Activated CD8-positive, alpha-beta memory T cell treated with anti-CD3 and anti-CD28 coated beads, Interleukin-2, amount 10 ng/mL, durations not matched to agents 7 days and 5 days (primary cell): ENCODE measurements at regions of chr6 and their contacts with region 1.

Region 1: GRCh38 chr6:41920921-41921711 is at the starts of genes BYSL and MED20:
- DNase-seq: peak; percentile 96
- ATAC-seq: peak; percentile 91
- H3K4me3 Mint-ChIP-seq: peak within 1 kb of the TSS; percentile 88
- H3K27ac Mint-ChIP-seq: peak within 1 kb of the TSS; percentile 98
- H3K4me1 Mint-ChIP-seq: peaks cover 57% of the 10 kb centered on the region
- H3K27me3 Mint-ChIP-seq: no peaks in the 10 kb centered on the region
- total RNA-seq, gene BYSL: 33.1 to 48.5 TPM
- total RNA-seq, gene MED20: 21.9 to 25.6 TPM

Region 2: DNA sequence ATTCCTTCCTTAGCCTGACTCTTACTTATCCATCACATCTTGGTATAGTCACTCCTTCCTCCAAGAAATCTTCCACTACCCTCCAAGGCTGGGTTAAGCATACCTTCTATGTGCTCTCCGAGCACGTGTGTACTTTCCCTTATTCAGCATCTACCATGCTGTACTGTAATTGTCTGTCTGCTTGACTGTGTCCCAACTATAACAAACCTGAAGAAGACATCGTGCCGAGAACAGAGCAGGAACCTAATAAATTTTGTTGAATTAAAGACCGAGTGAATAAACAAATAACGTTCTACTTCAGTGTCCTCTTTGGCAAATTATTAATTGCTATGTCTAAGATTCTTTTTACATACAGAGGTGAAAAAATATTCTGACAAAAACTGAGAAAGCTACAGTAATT is 61.8 kb before region 1 on chr6:
- CTCF ChIA-PET with region 1: no interaction called
- DNase-seq: no peak
- ATAC-seq: no peak
- H3K4me3 Mint-ChIP-seq: no peak overlapping the region
- H3K27ac Mint-ChIP-seq: no peak overlapping the region
- H3K4me1 Mint-ChIP-seq: no peaks in the 10 kb centered on the region
- H3K27me3 Mint-ChIP-seq: no peaks in the 10 kb centered on the region

Region 3: GRCh38 chr6:41895300-41896233 is 25.5 kb before region 1 on chr6 and contains the start of gene USP49:
- CTCF ChIA-PET with region 1: interaction called, 31 read pairs
- DNase-seq: peak; percentile 94
- ATAC-seq: peak; percentile 98
- H3K4me3 Mint-ChIP-seq: no peak within 1 kb of the TSS
- H3K27ac Mint-ChIP-seq: peak within 1 kb of the TSS; percentile 75
- H3K4me1 Mint-ChIP-seq: peaks cover 9% of the 10 kb centered on the region
- H3K27me3 Mint-ChIP-seq: peaks cover 4% of the 10 kb centered on the region
- total RNA-seq, gene USP49: 7.7 to 9.1 TPM

Region 4: DNA sequence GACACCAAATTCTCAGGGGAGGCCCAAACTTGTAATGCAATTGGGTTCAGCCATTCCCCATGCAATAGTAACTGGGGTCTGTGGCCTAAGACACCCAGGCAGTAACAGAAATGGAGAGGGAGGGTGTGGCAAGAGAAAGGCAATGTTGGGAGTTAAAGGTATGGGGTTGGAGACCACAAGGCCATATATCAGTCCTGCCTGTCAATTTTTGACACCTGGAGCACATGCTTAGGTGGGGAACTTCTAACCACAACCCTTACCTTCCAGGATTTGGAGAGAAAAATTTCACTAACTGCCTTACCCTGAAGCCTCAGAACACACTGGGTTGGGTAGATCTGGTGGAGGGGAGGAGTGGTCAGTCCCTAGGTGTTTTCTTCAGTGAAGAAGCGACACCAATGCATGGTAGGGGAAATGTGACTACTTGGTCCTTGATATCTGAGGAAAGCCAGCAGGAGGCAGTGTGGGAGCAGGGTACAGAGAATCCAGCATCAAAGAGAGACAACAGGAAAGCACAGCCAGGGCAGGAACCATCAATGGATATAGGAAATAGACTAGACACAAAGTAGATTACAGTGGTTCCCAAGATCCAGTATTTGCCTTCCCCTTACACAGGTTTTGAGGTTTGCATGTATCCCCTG is 19.1 kb before region 1 on chr6:
- CTCF ChIA-PET with region 1: interaction called, 31 read pairs
- DNase-seq: peak; percentile 67
- ATAC-seq: peak; percentile 57
- H3K4me3 Mint-ChIP-seq: no peak overlapping the region
- H3K27ac Mint-ChIP-seq: peak overlapping the region; percentile 41
- H3K4me1 Mint-ChIP-seq: peaks cover 15% of the 10 kb centered on the region
- H3K27me3 Mint-ChIP-seq: no peaks in the 10 kb centered on the region

Region 5: DNA sequence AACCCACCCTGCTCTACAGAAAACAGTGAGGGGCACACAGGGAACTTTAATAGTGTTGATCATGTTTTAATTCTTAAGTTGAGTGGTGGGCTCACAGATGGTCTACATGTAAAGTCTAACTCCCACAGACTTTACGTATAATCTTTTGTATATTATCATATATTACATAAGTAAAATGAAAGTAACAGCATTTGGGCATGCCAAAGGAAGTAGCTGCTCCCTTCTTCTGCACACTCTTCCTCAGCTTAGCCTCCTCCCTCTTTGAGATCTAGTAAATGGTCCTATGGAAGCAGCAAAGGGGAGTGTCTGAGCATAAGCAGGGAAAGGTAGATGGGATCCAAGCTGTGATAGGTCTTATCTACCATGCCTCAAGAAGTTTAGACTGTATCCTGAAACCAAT is 11.4 kb before region 1 on chr6:
- CTCF ChIA-PET with region 1: interaction called, 12 read pairs
- DNase-seq: no peak
- ATAC-seq: no peak
- H3K4me3 Mint-ChIP-seq: no peak overlapping the region
- H3K27ac Mint-ChIP-seq: peak overlapping the region; percentile 18
- H3K4me1 Mint-ChIP-seq: peaks cover 23% of the 10 kb centered on the region
- H3K27me3 Mint-ChIP-seq: no peaks in the 10 kb centered on the region

Region 6: DNA sequence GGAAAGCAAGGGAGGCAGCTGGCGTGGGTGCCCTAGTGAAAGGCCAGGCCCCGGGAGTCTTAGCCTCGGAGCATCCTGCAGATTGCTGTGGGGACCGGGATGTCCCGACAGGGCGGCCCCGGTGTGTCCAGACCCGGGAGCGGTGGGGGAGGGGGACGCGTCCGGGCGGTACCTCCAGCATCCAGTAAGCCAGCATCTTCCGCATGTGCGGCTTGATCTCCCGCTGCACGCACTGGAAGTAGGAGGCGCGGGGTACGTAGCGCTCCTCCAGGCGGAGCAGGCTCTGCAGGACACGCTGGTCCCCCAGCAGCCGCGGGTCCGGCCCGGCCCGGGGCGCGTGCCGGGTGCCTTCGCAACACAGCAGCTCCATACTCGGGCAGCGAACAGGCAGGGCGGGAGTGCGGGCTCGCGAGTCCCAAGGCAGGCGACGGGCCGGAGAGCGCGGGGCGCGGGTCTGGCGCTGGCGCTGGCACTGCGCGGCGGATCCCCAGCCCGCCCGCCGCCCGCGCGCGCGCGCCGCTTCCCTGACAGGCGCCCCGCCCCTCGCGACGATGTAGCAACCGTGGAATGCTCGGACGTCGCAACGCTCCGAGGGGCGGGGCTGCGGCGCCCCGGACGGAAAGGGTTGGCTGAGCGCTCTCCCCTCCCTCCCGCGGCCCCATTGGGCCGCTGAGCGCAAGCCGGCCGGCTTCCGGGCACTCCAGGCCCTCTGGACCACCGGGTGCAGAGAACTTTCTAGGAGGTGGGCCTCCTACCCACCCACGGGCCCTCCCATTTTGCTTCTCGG is 20.4 kb after region 1 on chr6 and contains the start of gene CCND3:
- CTCF ChIA-PET with region 1: interaction called, 177 read pairs
- DNase-seq: peak; percentile 95
- ATAC-seq: peak; percentile 84
- H3K4me3 Mint-ChIP-seq: peak within 1 kb of the TSS; percentile 99
- H3K27ac Mint-ChIP-seq: peak within 1 kb of the TSS; percentile 89
- H3K4me1 Mint-ChIP-seq: peaks cover 55% of the 10 kb centered on the region
- H3K27me3 Mint-ChIP-seq: no peaks in the 10 kb centered on the region
- total RNA-seq, gene CCND3: 333 to 502 TPM

Region 7: GRCh38 chr6:41996997-41997396 is 75.9 kb after region 1 on chr6:
- CTCF ChIA-PET with region 1: no interaction called
- DNase-seq: no peak
- ATAC-seq: no peak
- H3K4me3 Mint-ChIP-seq: no peak overlapping the region
- H3K27ac Mint-ChIP-seq: no peak overlapping the region
- H3K4me1 Mint-ChIP-seq: peaks cover 10% of the 10 kb centered on the region
- H3K27me3 Mint-ChIP-seq: no peaks in the 10 kb centered on the region

Region 8: GRCh38 chr6:42017021-42017643 is 96.0 kb after region 1 on chr6:
- CTCF ChIA-PET with region 1: interaction called, 12 read pairs
- DNase-seq: peak; percentile 74
- ATAC-seq: peak; percentile 82
- H3K4me3 Mint-ChIP-seq: peak overlapping the region; percentile 22
- H3K27ac Mint-ChIP-seq: peak overlapping the region; percentile 91
- H3K4me1 Mint-ChIP-seq: peaks cover 68% of the 10 kb centered on the region
- H3K27me3 Mint-ChIP-seq: no peaks in the 10 kb centered on the region

Region 9: GRCh38 chr6:42050266-42051032 is 129.3 kb after region 1 on chr6 and contains the start of gene TAF8:
- CTCF ChIA-PET with region 1: interaction called, 184 read pairs
- DNase-seq: peak; percentile 96
- ATAC-seq: peak; percentile 82
- H3K4me3 Mint-ChIP-seq: peak within 1 kb of the TSS; percentile 94
- H3K27ac Mint-ChIP-seq: peak within 1 kb of the TSS; percentile 98
- H3K4me1 Mint-ChIP-seq: peaks cover 68% of the 10 kb centered on the region
- H3K27me3 Mint-ChIP-seq: no peaks in the 10 kb centered on the region
- total RNA-seq, gene TAF8: 50.9 to 53.2 TPM

Region 10: DNA sequence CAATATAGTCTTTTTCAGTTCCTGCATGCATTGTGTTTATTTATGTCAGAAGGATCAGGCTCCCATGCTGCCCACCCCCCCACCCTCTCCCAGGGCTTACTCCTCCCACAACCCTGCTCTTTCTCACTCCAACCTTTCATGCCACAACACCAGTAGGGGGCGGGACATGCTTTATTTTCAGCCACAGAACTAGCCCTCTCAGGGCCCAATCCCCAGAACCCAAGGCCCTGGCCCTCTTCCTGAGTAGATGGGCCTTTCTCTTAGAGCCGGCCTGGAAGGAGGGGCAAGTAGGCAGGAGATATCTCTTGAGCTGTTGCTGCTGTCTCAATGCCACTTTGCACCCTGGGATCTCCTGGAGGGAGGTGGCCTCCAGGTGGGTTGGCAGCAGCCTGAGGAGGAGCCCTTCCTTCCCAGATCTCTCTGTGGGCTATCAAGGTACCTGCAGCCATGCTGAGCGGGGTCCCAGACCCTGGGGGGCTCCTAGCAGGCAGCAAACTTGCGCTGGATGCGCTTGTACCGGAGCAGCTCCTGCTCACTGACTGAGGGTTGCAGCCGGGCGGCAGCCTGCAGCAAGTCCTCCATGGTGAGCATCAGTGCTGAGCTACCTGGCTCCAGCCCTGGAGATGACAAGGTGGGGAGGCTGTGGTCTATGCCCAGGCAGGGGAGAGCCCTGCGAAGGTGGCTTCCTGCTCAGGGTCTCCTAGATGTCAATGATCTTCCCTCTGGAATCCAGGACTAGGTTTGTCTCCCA is 1042.9 kb after region 1 on chr6:
- CTCF ChIA-PET with region 1: no interaction called
- DNase-seq: peak; percentile 62
- ATAC-seq: peak; percentile 47
- H3K4me3 Mint-ChIP-seq: no peak overlapping the region
- H3K27ac Mint-ChIP-seq: no peak overlapping the region
- H3K4me1 Mint-ChIP-seq: peaks cover 12% of the 10 kb centered on the region
- H3K27me3 Mint-ChIP-seq: peaks cover 7% of the 10 kb centered on the region

Region 11: GRCh38 chr6:43369174-43370022 is 1448.3 kb after region 1 on chr6 and contains the start of gene ZNF318:
- CTCF ChIA-PET with region 1: no interaction called
- DNase-seq: peak; percentile 96
- ATAC-seq: peak; percentile 96
- H3K4me3 Mint-ChIP-seq: peak within 1 kb of the TSS; percentile 79
- H3K27ac Mint-ChIP-seq: peak within 1 kb of the TSS; percentile 92
- H3K4me1 Mint-ChIP-seq: peaks cover 26% of the 10 kb centered on the region
- H3K27me3 Mint-ChIP-seq: peaks cover 9% of the 10 kb centered on the region
- total RNA-seq, gene ZNF318: 9.7 to 12.8 TPM